Tibial artery (tissue), 4 donors: ENCODE measurements at regions of chr10 and their contacts with region 1.

Region 1: GRCh38 chr10:116063107-116063506 is 209.9 kb downstream of the GFRA1 start:
- DNase-seq: no peak
- H3K4me3 ChIP-seq: no peak overlapping the region
- H3K27ac ChIP-seq: no peak overlapping the region
- H3K4me1 ChIP-seq: no peaks in the 10 kb centered on the region
- H3K27me3 ChIP-seq: peaks cover 0 to 5% of the 10 kb centered on the region in 2 donors
- CTCF ChIP-seq: no peak

Region 2: GRCh38 chr10:115921795-115922194 is 141.3 kb before region 1 on chr10:
- intact Hi-C with region 1: no loop called
- DNase-seq: no peak
- H3K4me3 ChIP-seq: no peak overlapping the region
- H3K27ac ChIP-seq: no peak overlapping the region
- H3K4me1 ChIP-seq: no peaks in the 10 kb centered on the region
- H3K27me3 ChIP-seq: no peaks in the 10 kb centered on the region
- CTCF ChIP-seq: no peak

Region 3: DNA sequence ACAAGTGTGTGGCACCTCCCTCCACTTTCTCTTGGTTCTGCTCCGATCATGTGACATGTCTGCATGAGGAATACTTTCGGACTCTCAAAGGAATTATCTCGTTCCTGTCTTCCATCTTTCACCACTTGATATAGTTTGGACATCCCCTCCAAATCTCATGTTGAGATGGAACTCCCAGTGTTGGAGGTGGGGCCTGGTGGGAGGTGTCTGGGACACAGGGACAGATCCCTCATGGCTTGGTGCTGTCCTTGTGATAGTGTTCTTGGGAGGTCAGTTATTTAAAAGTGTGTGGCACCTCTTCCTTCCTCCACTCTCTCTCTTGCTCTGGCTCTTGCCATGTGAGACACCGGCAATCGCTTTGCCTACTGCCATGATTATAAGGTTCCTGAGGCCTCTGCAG is 43.5 kb after region 1 on chr10:
- intact Hi-C with region 1: loop called (anchors 2 kb)
- DNase-seq: no peak
- H3K4me3 ChIP-seq: no peak overlapping the region
- H3K27ac ChIP-seq: no peak overlapping the region
- H3K4me1 ChIP-seq: no peaks in the 10 kb centered on the region
- H3K27me3 ChIP-seq: peaks cover 0 to 3% of the 10 kb centered on the region in 2 donors
- CTCF ChIP-seq: no peak